Mammary epithelial cell (primary cell): ENCODE measurements at regions of chr19 and their contacts with region 1.

Region 1: DNA sequence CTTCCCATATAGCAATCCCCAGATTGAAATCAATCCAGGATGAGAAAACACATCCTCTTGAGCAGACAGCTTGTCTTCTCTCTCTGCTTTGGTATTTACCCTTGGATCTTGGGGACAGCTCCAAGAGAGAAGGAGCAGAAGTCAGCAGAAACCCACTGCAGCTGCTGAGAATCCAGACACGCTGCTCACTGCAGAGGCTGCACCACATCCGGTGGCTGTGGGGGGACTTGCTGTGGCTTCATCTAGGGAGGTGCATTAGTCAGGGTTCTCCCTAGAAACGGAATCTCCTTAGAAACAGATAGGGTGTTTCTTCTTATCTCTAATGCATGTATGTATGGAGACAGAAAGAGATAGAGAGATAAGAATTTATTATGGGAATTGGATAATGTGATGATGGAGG is 2.7 kb downstream of the CYP4F12 start:
- DNase-seq: no peak
- H3K4me3 ChIP-seq: no peak overlapping the region
- H3K27ac ChIP-seq: no peak overlapping the region
- H3K4me1 ChIP-seq: no peaks in the 10 kb centered on the region
- H3K27me3 ChIP-seq: no peaks in the 10 kb centered on the region
- CTCF ChIP-seq: no peak

Region 2: GRCh38 chr19:15663247-15663646 is 12.3 kb before region 1 on chr19:
- CTCF ChIA-PET with region 1: no interaction called
- dilution Hi-C with region 1: no loop called
- in situ Hi-C with region 1: no loop called
- intact Hi-C with region 1: no loop called
- DNase-seq: no peak
- H3K4me3 ChIP-seq: no peak overlapping the region
- H3K27ac ChIP-seq: no peak overlapping the region
- H3K4me1 ChIP-seq: no peaks in the 10 kb centered on the region
- H3K27me3 ChIP-seq: no peaks in the 10 kb centered on the region
- CTCF ChIP-seq: no peak

Region 3: GRCh38 chr19:15702534-15702930 is 27.0 kb after region 1 on chr19:
- CTCF ChIA-PET with region 1: no interaction called
- dilution Hi-C with region 1: no loop called
- in situ Hi-C with region 1: no loop called
- intact Hi-C with region 1: no loop called
- DNase-seq: peak; percentile 60
- H3K4me3 ChIP-seq: no peak overlapping the region
- H3K27ac ChIP-seq: no peak overlapping the region
- H3K4me1 ChIP-seq: no peaks in the 10 kb centered on the region
- H3K27me3 ChIP-seq: no peaks in the 10 kb centered on the region
- CTCF ChIP-seq: no peak

Region 4: DNA sequence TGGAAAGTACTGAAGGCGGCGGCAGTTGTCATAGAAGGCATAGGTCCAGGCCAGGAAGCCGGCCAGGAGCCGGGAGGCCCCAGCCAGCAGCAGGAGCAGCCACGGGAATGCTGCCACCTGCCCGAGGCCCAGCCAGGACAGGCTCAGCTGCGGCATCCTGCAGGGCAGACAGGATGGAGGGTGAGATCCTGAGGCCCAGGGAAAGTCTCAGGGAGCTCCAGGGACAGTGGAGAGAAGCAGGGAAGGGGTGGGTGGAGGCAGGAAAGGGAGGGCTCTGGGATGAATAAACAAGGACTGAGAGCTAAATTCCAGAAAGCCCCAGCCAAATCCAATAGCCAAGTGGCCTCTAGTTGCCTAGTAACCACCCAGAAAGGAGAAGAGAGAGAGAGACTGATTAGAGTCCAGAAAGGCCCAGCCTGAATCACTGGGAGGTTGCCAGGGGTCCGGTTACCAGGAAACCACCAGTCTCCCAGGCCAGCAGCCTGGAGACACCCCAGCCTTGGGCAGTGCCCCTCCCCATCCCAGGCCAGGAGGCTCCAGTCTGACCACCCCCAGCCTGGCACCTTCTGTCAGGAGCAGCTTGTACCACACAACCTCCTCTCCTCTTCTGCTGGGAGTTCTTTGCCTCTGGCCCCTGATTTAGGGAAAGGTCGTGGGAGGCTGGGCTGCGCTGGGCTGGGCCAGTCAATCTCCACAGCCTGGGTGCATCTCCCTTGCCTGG is 104.4 kb after region 1 on chr19:
- CTCF ChIA-PET with region 1: no interaction called
- dilution Hi-C with region 1: no loop called
- in situ Hi-C with region 1: loop called in 1 of 2 experiments (anchors 5 kb)
- intact Hi-C with region 1: no loop called
- DNase-seq: peak; percentile 11
- H3K4me3 ChIP-seq: no peak overlapping the region
- H3K27ac ChIP-seq: no peak overlapping the region
- H3K4me1 ChIP-seq: no peaks in the 10 kb centered on the region
- H3K27me3 ChIP-seq: no peaks in the 10 kb centered on the region
- CTCF ChIP-seq: no peak